ENCODE measurements at regions of chr4 and their contacts with region 1.

Region 1: GRCh38 chr4:158496030-158496741 is 25.5 kb upstream of the RXFP1 start:
- DNase-seq: peak; percentile 57
- H3K4me3 ChIP-seq: no peak overlapping the region
- H3K27ac ChIP-seq: no peak overlapping the region
- H3K4me1 ChIP-seq: no peaks in the 10 kb centered on the region
- H3K27me3 ChIP-seq: no peaks in the 10 kb centered on the region
- CTCF ChIP-seq: peak; percentile 58 to 79
- POLR2A ChIP-seq: no peak

Region 2: GRCh38 chr4:158259955-158260575 is 236.1 kb before region 1 on chr4:
- CTCF ChIA-PET with region 1: interaction called, 20 read pairs
- POLR2A ChIA-PET with region 1: no interaction called
- dilution Hi-C with region 1: no loop called
- intact Hi-C with region 1: loop called (anchors 1 kb)
- DNase-seq: peak; percentile 53
- H3K4me3 ChIP-seq: no peak overlapping the region
- H3K27ac ChIP-seq: no peak overlapping the region
- H3K4me1 ChIP-seq: no peaks in the 10 kb centered on the region
- H3K27me3 ChIP-seq: no peaks in the 10 kb centered on the region
- CTCF ChIP-seq: peak in 1 of 2 donors; percentile 7
- POLR2A ChIP-seq: no peak

Region 3: GRCh38 chr4:158484173-158484885 is 11.9 kb before region 1 on chr4:
- CTCF ChIA-PET with region 1: interaction called, 19 read pairs
- POLR2A ChIA-PET with region 1: no interaction called
- dilution Hi-C with region 1: no loop called
- intact Hi-C with region 1: no loop called
- DNase-seq: no peak
- H3K4me3 ChIP-seq: no peak overlapping the region
- H3K27ac ChIP-seq: no peak overlapping the region
- H3K4me1 ChIP-seq: no peaks in the 10 kb centered on the region
- H3K27me3 ChIP-seq: no peaks in the 10 kb centered on the region
- CTCF ChIP-seq: no peak
- POLR2A ChIP-seq: no peak

Region 4: DNA sequence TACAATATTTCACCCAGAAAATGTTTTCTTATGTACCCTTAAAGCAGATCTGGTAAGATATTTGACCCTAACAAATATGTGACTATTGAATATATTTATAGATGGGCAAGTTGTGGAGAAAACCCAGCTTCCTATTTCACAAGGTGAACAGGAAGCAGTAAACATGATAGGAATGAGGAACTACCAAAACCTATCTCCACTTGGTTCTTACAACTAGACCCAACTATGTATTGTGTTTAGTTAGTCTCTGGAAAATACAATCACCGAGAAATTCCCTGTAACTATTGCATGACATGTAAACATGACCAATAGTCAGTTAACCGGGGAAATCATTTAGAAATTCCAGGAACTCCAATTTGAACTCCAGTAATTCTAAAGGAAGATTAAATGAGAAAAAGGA is 17.1 kb after region 1 on chr4:
- CTCF ChIA-PET with region 1: interaction called, 13 read pairs
- POLR2A ChIA-PET with region 1: no interaction called
- dilution Hi-C with region 1: no loop called
- intact Hi-C with region 1: no loop called
- DNase-seq: no peak
- H3K4me3 ChIP-seq: no peak overlapping the region
- H3K27ac ChIP-seq: no peak overlapping the region
- H3K4me1 ChIP-seq: no peaks in the 10 kb centered on the region
- H3K27me3 ChIP-seq: no peaks in the 10 kb centered on the region
- CTCF ChIP-seq: no peak
- POLR2A ChIP-seq: no peak

Region 5: DNA sequence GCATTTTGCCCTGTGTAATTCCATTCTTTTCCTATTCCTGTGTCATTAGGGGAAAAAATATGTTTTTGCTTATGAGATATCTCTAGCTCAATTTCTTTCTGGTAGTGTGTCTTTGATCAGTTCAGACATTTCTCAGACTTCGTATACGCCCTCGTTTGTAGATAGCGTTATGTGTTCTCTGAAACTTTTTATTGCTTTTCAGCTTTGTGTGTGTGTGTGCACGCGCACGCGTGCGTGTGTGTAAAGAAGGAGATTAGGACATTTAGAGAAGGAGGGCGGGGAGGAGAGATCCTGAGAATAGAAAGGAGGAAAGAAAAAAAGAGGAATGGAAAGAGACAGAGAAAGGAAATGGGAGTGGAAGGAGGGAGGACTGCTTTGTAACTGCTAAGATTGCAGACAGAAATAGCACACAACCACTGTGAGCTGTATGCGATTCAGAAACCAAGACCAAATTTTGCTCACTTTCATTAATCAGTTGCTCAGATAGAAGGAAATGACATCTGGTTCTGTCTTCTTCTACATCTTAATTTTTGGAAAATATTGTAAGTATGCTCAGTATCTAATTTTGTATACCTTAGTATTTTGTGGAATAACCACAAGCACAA is 25.4 kb after region 1 on chr4 and contains the start of gene RXFP1:
- CTCF ChIA-PET with region 1: interaction called, 11 read pairs
- POLR2A ChIA-PET with region 1: no interaction called
- dilution Hi-C with region 1: no loop called
- intact Hi-C with region 1: no loop called
- DNase-seq: peak; percentile 28
- H3K4me3 ChIP-seq: peak within 1 kb of the TSS in 1 of 3 experiments; percentile 35
- H3K27ac ChIP-seq: no peak within 1 kb of the TSS
- H3K4me1 ChIP-seq: no peaks in the 10 kb centered on the region
- H3K27me3 ChIP-seq: no peaks in the 10 kb centered on the region
- CTCF ChIP-seq: no peak
- POLR2A ChIP-seq: no peak
- total RNA-seq, gene RXFP1: not detected in 2 replicates

Region 6: GRCh38 chr4:158578476-158578875 is 82.3 kb after region 1 on chr4:
- CTCF ChIA-PET with region 1: interaction called, 10 read pairs
- POLR2A ChIA-PET with region 1: no interaction called
- dilution Hi-C with region 1: no loop called
- intact Hi-C with region 1: loop called (anchors 1 kb)
- DNase-seq: peak; percentile 52
- H3K4me3 ChIP-seq: no peak overlapping the region
- H3K27ac ChIP-seq: no peak overlapping the region
- H3K4me1 ChIP-seq: no peaks in the 10 kb centered on the region
- H3K27me3 ChIP-seq: no peaks in the 10 kb centered on the region
- CTCF ChIP-seq: peak; percentile 27 to 45
- POLR2A ChIP-seq: no peak

Measured in endothelial cell of umbilical vein (primary cell).